Panc1 (cell line): ENCODE measurements at regions of chr15 and their contacts with region 1.

Region 1: DNA sequence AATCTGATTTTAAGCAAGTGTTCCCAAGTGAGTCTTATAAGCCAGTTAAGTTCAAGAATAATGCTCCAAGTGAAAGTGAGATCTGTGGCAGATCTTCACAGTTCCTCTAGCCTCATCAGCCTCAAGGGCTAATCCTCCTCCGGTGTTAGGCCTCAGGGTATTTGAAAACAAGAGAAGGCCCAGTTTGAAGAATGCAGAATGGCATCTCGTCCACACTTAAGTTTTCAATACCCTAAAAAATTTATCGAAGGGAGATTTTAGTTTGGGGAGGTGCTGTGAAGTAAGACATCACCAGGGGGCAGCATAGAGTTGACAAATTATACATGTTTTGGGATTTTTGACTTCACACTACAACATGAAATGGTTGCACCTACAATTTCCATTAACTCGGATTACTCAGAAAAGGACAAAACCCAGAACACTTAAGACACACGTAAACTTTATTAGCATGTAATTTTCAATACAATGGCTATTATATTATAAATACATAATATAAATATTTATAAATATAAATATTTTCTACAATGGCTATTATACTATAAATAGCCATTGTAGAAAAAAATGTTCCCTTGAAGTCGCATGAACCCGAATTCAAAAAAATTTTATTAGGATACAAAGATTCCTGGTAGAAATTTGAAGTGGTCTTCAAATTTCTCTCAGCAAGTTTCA is 2.3 kb upstream of the TMEM266 start:
- DNase-seq: no peak
- ATAC-seq: no peak
- H3K4me3 ChIP-seq: peak overlapping the region; percentile 9 to 31; a peak in 2 of 4 replicates
- H3K27ac ChIP-seq: no peak overlapping the region
- H3K4me1 ChIP-seq: peaks cover 15% of the 10 kb centered on the region
- H3K27me3 ChIP-seq: peaks cover 37% of the 10 kb centered on the region
- CTCF ChIP-seq: peak; percentile 82

Region 2: DNA sequence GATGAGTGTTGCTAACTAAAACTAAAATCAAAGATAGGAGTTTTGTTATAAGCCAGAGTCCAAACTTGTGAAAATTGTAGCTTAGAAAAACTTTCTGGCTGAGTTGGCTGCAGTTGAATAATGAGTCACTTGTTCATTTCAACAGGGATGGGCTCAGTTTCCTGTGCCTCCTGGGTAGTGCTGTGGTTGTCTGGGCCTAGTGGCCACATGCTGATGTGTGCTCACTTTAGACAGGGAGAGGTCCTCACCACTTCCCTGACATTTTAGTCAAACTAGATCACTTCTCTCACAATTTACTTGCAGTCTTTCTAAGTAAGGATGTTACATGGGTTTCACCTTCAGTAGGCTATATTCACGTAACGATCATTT is 220.5 kb before region 1 on chr15:
- CTCF ChIA-PET with region 1: no interaction called
- POLR2A ChIA-PET with region 1: no interaction called
- in situ Hi-C with region 1: no loop called
- intact Hi-C with region 1: loop called (anchors 10 kb)
- DNase-seq: no peak
- ATAC-seq: no peak
- H3K4me3 ChIP-seq: no peak overlapping the region
- H3K27ac ChIP-seq: no peak overlapping the region
- H3K4me1 ChIP-seq: no peaks in the 10 kb centered on the region
- H3K27me3 ChIP-seq: no peaks in the 10 kb centered on the region; the same call in 1 of the 2 replicates
- CTCF ChIP-seq: no peak

Region 3: GRCh38 chr15:76115888-76116885 is 58.7 kb after region 1 on chr15:
- CTCF ChIA-PET with region 1: no interaction called
- POLR2A ChIA-PET with region 1: no interaction called
- in situ Hi-C with region 1: no loop called
- intact Hi-C with region 1: no loop called
- DNase-seq: no peak
- ATAC-seq: no peak; the same call in 1 of the 2 replicates
- H3K4me3 ChIP-seq: no peak overlapping the region
- H3K27ac ChIP-seq: no peak overlapping the region
- H3K4me1 ChIP-seq: no peaks in the 10 kb centered on the region
- H3K27me3 ChIP-seq: no peaks in the 10 kb centered on the region
- CTCF ChIP-seq: no peak

Region 4: GRCh38 chr15:76139368-76140073 is 82.1 kb after region 1 on chr15:
- CTCF ChIA-PET with region 1: interaction called, 48 read pairs
- POLR2A ChIA-PET with region 1: no interaction called
- in situ Hi-C with region 1: no loop called
- intact Hi-C with region 1: loop called (anchors 1 kb)
- DNase-seq: peak; percentile 61
- ATAC-seq: peak; percentile 93
- H3K4me3 ChIP-seq: no peak overlapping the region
- H3K27ac ChIP-seq: no peak overlapping the region
- H3K4me1 ChIP-seq: no peaks in the 10 kb centered on the region
- H3K27me3 ChIP-seq: no peaks in the 10 kb centered on the region
- CTCF ChIP-seq: peak; percentile 95

Region 5: DNA sequence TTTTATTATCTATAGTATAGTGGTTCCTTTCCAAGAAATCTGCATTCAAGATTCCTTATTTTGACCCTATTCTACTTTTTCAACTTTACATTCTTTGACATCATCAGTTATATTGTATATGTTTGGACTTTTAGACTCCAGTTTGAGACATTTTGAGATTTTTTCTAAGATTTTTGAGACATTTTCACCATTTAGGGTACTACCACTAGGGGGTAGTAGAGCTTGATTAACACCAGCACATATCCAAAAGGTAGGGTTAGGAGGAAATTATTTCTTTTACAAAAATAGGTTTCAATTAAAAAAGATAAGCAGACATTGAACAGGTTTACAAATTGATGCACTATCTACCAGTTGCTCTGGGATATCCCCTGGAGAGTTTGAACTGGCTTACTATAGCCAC is 585.2 kb after region 1 on chr15:
- CTCF ChIA-PET with region 1: interaction called, 12 read pairs
- POLR2A ChIA-PET with region 1: no interaction called
- in situ Hi-C with region 1: no loop called
- intact Hi-C with region 1: no loop called
- DNase-seq: no peak
- ATAC-seq: no peak
- H3K4me3 ChIP-seq: no peak overlapping the region
- H3K27ac ChIP-seq: no peak overlapping the region
- H3K4me1 ChIP-seq: no peaks in the 10 kb centered on the region
- H3K27me3 ChIP-seq: no peaks in the 10 kb centered on the region
- CTCF ChIP-seq: peak; percentile 38; the same call in 1 of the 2 replicates

Region 6: GRCh38 chr15:77058468-77058867 is 1001.0 kb after region 1 on chr15:
- CTCF ChIA-PET with region 1: no interaction called
- POLR2A ChIA-PET with region 1: interaction called, 11 read pairs
- in situ Hi-C with region 1: no loop called
- intact Hi-C with region 1: no loop called
- DNase-seq: no peak
- ATAC-seq: no peak
- H3K4me3 ChIP-seq: no peak overlapping the region
- H3K27ac ChIP-seq: no peak overlapping the region
- H3K4me1 ChIP-seq: 0 out of 2 replicates have a peak, but pooled peaks cover 4% of the 10 kb centered on the region
- H3K27me3 ChIP-seq: no peaks in the 10 kb centered on the region
- CTCF ChIP-seq: no peak